CD8-positive, alpha-beta memory T cell (primary cell): ENCODE measurements at regions of chr6 and their contacts with region 1.

Region 1: DNA sequence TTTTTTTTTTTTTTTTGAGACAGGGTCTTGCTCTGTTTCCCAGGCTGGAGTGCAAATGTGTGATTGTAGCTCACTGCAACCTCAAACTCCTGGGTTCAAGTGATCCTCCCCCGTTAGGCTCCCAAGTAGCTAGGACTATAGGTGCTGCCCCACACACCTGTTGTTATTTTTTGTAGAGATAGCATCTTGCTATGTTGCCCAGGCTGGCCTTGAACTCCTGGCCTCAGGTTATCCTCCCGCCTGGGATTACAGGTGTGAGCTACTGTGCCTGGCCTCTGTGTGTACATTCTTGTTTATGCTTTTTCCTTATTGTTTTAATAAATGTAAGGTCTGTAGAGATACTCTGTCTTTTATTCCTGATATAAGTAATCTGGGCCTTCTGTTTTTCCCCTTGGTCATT is 14.8 kb downstream of the CD2AP start:
- DNase-seq: no peak
- H3K4me3 ChIP-seq: no peak overlapping the region
- H3K4me3 Mint-ChIP-seq: no peak overlapping the region
- H3K27ac ChIP-seq: no peak overlapping the region
- H3K27ac Mint-ChIP-seq: no peak overlapping the region
- H3K4me1 ChIP-seq: peaks cover 3% of the 10 kb centered on the region
- H3K4me1 Mint-ChIP-seq: peaks cover 64 to 81% (median 75%) of the 10 kb centered on the region in 3 donors
- H3K27me3 ChIP-seq: no peaks in the 10 kb centered on the region
- H3K27me3 Mint-ChIP-seq: no peaks in the 10 kb centered on the region

Region 2: DNA sequence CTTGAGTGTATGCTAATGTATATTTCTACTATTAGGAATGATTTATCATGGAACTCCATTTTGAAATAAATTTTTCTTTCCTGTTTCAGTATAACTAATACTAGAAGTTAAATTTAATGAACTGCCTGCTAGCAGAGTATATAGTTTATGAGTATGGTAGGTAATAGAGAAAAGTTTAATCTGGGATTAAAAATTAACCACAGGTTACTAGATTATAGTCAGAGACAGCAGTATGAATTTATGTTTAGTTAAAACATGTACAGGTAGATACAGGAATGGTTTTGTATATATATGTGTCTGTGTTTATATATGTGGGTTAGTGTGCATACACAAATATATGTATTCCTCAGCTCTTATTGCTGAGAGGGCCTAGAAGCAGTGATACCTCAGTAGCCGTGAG is 17.6 kb after region 1 on chr6:
- CTCF ChIA-PET with region 1: no interaction called
- POLR2A ChIA-PET with region 1: no interaction called
- DNase-seq: no peak
- H3K4me3 ChIP-seq: no peak overlapping the region
- H3K4me3 Mint-ChIP-seq: no peak overlapping the region
- H3K27ac ChIP-seq: no peak overlapping the region
- H3K27ac Mint-ChIP-seq: no peak overlapping the region
- H3K4me1 ChIP-seq: no peaks in the 10 kb centered on the region
- H3K4me1 Mint-ChIP-seq: peaks cover 22 to 57% (median 29%) of the 10 kb centered on the region in 3 donors
- H3K27me3 ChIP-seq: no peaks in the 10 kb centered on the region
- H3K27me3 Mint-ChIP-seq: no peaks in the 10 kb centered on the region

Region 3: DNA sequence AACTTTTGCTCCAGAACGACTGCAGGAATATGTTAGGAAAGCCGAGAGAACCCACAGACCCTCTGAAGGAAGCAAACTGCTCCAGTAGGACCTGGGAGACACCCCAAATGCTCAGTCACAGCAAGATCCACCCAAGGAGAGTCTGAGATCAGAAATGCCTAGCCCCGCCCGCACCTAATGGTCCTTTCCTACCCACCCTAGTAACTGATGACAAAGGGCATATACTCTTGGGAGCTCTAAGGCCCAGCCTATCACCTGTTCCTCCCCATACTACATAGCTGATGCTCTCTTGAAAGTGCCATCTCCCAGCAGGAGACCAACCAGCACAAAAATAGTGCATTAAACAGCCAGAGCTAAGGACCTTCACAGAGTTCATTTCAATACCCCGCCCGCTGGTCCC is 52.9 kb after region 1 on chr6:
- CTCF ChIA-PET with region 1: no interaction called
- POLR2A ChIA-PET with region 1: interaction called, 16 read pairs
- DNase-seq: no peak
- H3K4me3 ChIP-seq: no peak overlapping the region
- H3K4me3 Mint-ChIP-seq: no peak overlapping the region
- H3K27ac ChIP-seq: no peak overlapping the region
- H3K27ac Mint-ChIP-seq: peak overlapping the region in 1 of 8 donors; percentile 68
- H3K4me1 ChIP-seq: no peaks in the 10 kb centered on the region
- H3K4me1 Mint-ChIP-seq: peaks cover 4 to 21% (median 11%) of the 10 kb centered on the region in 3 donors
- H3K27me3 ChIP-seq: no peaks in the 10 kb centered on the region
- H3K27me3 Mint-ChIP-seq: no peaks in the 10 kb centered on the region